Ovary (tissue), 10 donors: ENCODE measurements at regions of chrX and their contacts with region 1.

Region 1: DNA sequence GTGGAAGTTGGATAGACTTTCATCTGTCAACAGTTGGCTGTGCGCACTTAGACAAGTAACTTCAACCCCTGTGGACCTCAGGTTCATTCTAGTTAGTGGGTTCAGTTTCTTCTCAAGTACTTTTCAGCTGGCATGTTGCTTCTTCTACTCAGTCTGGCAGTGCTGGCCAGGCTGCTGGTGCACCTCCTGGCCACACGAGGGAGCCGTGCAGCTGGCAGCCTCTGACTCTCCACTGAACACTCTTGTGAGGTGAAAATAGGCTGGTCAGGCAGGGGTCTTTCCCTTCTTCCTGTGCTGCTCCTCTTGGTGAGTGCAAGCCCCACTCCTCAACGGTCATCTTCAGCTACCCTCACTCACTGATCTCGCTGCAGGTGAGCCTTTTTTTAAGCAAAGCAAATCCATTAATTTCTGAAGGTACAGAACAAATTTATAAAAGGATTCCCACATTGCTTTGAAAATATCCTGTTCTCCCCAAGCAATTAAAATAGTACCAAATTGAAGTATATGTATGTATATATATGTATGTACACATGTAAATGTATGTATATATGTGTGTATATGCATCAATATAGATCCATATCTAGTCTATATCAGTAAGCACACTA is 30.6 kb downstream of the LONRF3 start:
- DNase-seq: peak; percentile 36 to 69 (median 56)
- H3K4me3 ChIP-seq: no peak overlapping the region
- H3K27ac ChIP-seq: no peak overlapping the region
- H3K4me1 ChIP-seq: no peaks in the 10 kb centered on the region
- H3K27me3 ChIP-seq: no peaks in the 10 kb centered on the region
- CTCF ChIP-seq: peak; percentile 52 to 71 (median 57)
- EP300 ChIP-seq: no peak
- POLR2A ChIP-seq: no peak

Region 2: GRCh38 chrX:118853596-118853995 is 151.4 kb before region 1 on chrX:
- intact Hi-C with region 1: loop called in 1 of 4 experiments (anchors 5 kb)
- DNase-seq: no peak
- H3K4me3 ChIP-seq: no peak overlapping the region
- H3K27ac ChIP-seq: no peak overlapping the region
- H3K4me1 ChIP-seq: no peaks in the 10 kb centered on the region
- H3K27me3 ChIP-seq: no peaks in the 10 kb centered on the region
- CTCF ChIP-seq: no peak
- EP300 ChIP-seq: no peak
- POLR2A ChIP-seq: no peak